Heart left ventricle (tissue), 16 donors: ENCODE measurements at regions of chr12 and their contacts with region 1.

Region 1: DNA sequence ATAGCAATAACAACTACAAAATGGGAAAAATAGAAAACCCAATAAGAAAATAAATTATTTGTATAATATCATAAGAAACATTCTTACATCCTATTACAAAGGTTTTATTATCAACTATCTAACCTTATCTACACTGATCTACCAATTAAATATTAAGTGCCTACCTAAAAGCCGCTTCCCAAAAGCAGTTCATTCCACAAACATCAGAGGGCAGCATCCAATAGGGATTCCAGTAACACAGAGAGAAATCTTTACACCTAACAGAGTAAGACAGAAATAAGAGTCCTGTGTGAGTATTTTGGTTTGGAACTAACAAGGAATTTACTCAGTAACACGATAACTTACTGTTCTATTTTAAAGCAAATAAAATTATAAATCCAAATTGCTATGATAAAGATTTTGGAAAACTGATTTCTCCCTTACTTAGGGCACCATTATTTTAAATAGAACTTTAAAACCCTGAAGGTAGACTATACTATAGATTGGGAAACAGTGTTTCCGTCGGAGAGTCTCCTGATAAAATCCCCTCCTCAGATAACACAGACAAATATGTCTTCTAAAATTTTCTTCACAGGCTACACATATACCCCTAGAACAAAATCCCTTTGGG is 15.0 kb downstream of the GXYLT1 start:
- DNase-seq: peak in 1 of 5 donors; percentile 17
- ATAC-seq: peak; percentile 54 to 84 (median 74)
- H3K4me3 ChIP-seq: no peak overlapping the region
- H3K27ac ChIP-seq: no peak overlapping the region
- H3K4me1 ChIP-seq: peaks cover 0 to 34% (median 13%) of the 10 kb centered on the region in 12 donors
- H3K27me3 ChIP-seq: no peaks in the 10 kb centered on the region
- CTCF ChIP-seq: peak; percentile 66 to 91 (median 86)
- POLR2A ChIP-seq: no peak

Region 2: DNA sequence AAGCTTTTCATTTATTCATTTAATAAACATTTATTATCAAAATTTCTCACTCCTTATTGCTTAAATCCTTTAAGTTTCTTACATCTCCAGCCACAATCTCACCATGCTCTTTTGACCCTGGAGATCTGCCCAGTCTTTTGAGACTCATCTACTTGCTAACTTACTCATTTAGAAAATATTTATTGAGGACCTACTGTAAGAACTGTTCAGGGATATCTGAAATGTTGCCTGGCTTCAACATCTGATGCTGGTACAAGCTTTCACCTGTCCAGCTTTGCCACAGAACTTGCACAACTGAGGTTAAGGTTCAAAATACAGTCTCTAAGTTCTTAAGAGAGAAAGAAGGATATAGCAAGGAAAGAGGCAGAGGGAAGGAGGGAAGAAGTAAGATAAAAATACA is 32.5 kb after region 1 on chr12:
- intact Hi-C with region 1: no loop called
- DNase-seq: no peak
- ATAC-seq: no peak
- H3K4me3 ChIP-seq: no peak overlapping the region
- H3K27ac ChIP-seq: no peak overlapping the region
- H3K4me1 ChIP-seq: peaks cover 0 to 25% (median 9%) of the 10 kb centered on the region in 12 donors
- H3K27me3 ChIP-seq: no peaks in the 10 kb centered on the region
- CTCF ChIP-seq: no peak
- POLR2A ChIP-seq: no peak

Region 3: DNA sequence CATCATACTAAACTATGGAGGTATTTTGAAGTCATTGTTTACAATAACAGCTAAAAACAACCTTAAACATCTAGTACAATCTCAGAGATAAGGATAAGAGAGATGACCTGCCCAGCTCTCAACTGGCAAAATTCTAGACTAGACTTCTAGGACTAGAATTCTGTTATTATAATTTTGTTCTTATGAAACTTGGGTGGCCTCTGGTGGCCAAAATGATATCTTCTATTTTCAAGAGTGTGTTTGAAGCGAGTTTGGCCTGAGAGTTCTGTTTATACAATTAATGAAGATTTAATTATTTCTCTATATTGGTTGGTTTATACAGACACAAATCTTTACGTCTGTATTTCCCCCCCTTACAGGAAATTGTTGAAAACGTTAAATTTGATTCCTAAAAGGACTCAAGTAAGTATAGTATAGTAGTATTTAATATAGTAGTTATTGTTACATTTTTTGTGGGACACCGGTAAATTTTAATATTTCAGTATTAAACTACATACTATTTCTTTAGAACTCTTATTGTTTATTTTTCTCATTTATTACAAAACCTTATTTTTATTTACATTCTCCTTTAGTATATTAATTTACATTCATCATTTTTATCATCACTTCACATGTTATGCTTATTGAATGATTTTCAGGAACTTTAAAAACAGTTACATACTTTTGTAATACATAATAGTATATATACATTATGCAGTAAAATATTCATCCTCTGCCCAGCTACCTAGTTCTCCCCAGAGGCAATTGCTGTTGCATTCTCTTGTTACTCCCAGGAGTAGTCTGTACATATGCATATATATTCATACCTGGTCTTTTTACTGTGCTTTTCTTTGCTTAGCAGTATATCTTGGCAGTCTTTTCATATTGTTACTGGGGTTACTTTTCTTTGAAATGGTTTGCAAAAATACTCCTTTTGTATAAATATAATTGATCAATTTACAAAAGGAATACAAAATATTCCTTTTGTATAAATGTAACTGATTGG is 202.9 kb after region 1 on chr12:
- intact Hi-C with region 1: loop called (anchors 1 to 5 kb)
- DNase-seq: no peak
- ATAC-seq: peak in 3 of 4 donors; percentile 39 to 67 (median 44)
- H3K4me3 ChIP-seq: no peak overlapping the region
- H3K27ac ChIP-seq: no peak overlapping the region
- H3K4me1 ChIP-seq: peaks cover 0 to 28% (median 9%) of the 10 kb centered on the region in 12 donors
- H3K27me3 ChIP-seq: no peaks in the 10 kb centered on the region
- CTCF ChIP-seq: peak; percentile 56 to 81 (median 66)
- POLR2A ChIP-seq: no peak

Region 4: GRCh38 chr12:42568952-42569915 is 439.5 kb after region 1 on chr12:
- intact Hi-C with region 1: loop called in 6 of 10 experiments (anchors 5 to 10 kb)
- DNase-seq: no peak
- ATAC-seq: peak in 3 of 4 donors; percentile 40 to 75 (median 66)
- H3K4me3 ChIP-seq: no peak overlapping the region
- H3K27ac ChIP-seq: no peak overlapping the region
- H3K4me1 ChIP-seq: peaks cover 0 to 41% (median 22%) of the 10 kb centered on the region in 12 donors
- H3K27me3 ChIP-seq: no peaks in the 10 kb centered on the region
- CTCF ChIP-seq: peak; percentile 48 to 80 (median 68)
- POLR2A ChIP-seq: no peak

Region 5: DNA sequence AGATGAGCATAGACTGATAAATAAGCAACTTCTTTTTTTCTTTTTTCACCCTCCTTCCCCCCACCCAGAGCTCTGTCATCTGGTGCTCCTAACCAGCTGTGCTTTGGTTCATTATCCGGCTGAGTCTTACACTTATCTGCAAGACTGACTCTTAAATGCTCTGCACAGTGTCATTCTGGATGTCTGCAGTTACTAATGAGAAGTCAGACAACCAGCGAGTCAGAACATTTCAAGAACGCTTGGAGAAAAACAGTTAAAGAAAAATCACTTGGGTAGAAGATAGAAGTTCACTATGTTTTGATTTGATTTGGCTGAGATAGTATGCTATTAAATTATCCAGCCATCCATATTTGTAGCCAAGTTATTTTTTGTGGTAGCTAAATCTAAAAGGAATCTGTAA is 788.7 kb after region 1 on chr12:
- intact Hi-C with region 1: no loop called
- DNase-seq: no peak
- ATAC-seq: peak in 3 of 4 donors; percentile 71 to 92 (median 77)
- H3K4me3 ChIP-seq: no peak overlapping the region
- H3K27ac ChIP-seq: no peak overlapping the region
- H3K4me1 ChIP-seq: peaks cover 0 to 11% (median 0%) of the 10 kb centered on the region in 12 donors
- H3K27me3 ChIP-seq: no peaks in the 10 kb centered on the region
- CTCF ChIP-seq: no peak
- POLR2A ChIP-seq: no peak

Region 6: DNA sequence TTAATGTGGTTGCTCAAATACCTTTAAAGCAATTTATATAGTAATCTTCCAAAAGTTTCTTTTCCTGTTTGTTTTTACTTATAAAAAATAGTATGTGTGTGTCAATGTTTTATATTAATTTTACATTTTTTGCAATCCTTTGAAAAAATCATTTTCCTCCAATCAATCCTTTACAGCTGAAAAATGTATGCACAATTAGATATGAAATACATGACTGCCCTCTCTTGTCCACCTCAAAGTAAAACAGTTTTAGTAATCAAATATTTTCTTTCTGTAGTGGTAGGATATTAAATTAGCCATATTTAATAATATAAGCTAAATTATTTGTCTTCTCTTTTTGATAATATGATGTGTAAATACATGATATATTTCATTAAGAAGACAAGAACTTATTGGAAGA is 1152.4 kb after region 1 on chr12:
- intact Hi-C with region 1: loop called in 1 of 10 experiments (anchors 5 kb)
- DNase-seq: no peak
- ATAC-seq: no peak
- H3K4me3 ChIP-seq: no peak overlapping the region
- H3K27ac ChIP-seq: no peak overlapping the region
- H3K4me1 ChIP-seq: peaks cover 0 to 21% (median 0%) of the 10 kb centered on the region in 12 donors
- H3K27me3 ChIP-seq: no peaks in the 10 kb centered on the region
- CTCF ChIP-seq: peak in 10 of 12 donors; percentile 10 to 65 (median 50)
- POLR2A ChIP-seq: no peak

Region 7: GRCh38 chr12:43349863-43350262 is 1220.2 kb after region 1 on chr12:
- intact Hi-C with region 1: loop called in 2 of 10 experiments (anchors 10 kb)
- DNase-seq: no peak
- ATAC-seq: no peak
- H3K4me3 ChIP-seq: no peak overlapping the region
- H3K27ac ChIP-seq: no peak overlapping the region
- H3K4me1 ChIP-seq: no peaks in the 10 kb centered on the region
- H3K27me3 ChIP-seq: peaks cover 0 to 5% (median 0%) of the 10 kb centered on the region in 9 donors
- CTCF ChIP-seq: peak in 2 of 12 donors; percentile 14 to 25
- POLR2A ChIP-seq: no peak